H1 (cell line): ENCODE measurements at regions of chr2 and their contacts with region 1.

Region 1: GRCh38 chr2:201182650-201183364 is at the start of gene CASP10:
- DNase-seq: no peak
- H3K4me3 ChIP-seq: peak within 1 kb of the TSS in 3 of 4 experiments; percentile 5 to 47 (median 17); a peak in 4 of 8 replicates
- H3K27ac ChIP-seq: peak within 1 kb of the TSS; percentile 46; the same call in 1 of the 2 replicates
- H3K4me1 ChIP-seq: no peaks in the 10 kb centered on the region
- H3K27me3 ChIP-seq: no peaks in the 10 kb centered on the region
- CTCF ChIP-seq: peak in 2 of 3 experiments; percentile 43 to 60; a peak in 3 of 4 replicates
- EP300 ChIP-seq: no peak
- POLR2A ChIP-seq: peak in 1 of 2 experiments; percentile 58; a peak in 1 of 3 replicates
- RAD21 ChIP-seq: peak; percentile 63 to 71
- total RNA-seq, gene CASP10: 4.0 and 4.2 TPM in 2 replicates

Region 2: DNA sequence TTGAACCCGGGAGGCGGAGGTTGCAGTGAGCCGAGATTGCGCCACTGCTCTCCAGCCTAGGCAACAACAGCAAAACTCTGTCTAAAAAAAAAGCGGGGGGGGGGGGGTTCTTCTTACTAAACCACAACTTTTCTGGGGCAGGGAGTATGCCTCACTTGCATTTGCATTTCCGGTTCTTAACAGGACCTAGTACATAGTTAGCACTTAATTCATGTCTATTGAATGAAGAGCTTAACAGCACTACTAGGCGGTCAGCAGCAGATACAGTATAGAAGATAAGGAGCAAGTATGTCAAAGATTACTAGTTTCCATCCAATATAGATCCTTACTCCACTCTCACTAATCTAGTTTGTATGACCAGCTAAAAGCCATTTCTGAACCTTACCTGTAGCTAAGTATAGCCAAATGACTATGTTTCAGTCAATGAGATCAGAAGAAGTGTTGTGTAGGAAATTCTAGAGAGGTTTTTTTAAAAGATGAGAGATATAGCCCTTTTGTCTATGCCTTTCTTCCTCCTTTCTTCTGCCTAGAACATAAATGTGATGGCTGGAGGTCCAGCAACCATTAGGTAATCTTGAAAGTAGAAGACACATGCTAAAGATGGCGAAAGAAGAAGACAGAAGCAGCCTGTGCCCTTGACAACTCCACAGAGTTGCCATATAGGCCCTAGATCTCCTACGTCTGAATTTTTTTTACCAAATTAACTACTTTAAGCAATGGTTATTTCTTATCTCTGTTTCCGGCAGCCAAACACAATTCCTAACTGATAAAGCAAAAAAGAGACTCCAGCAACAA is 122.6 kb before region 1 on chr2:
- CTCF ChIA-PET with region 1: no interaction called
- POLR2A ChIA-PET with region 1: no interaction called
- DNase-seq: no peak
- H3K4me3 ChIP-seq: no peak overlapping the region
- H3K27ac ChIP-seq: no peak overlapping the region
- H3K4me1 ChIP-seq: no peaks in the 10 kb centered on the region
- H3K27me3 ChIP-seq: no peaks in the 10 kb centered on the region
- CTCF ChIP-seq: no peak
- EP300 ChIP-seq: no peak
- POLR2A ChIP-seq: no peak
- RAD21 ChIP-seq: no peak

Region 3: GRCh38 chr2:201171259-201171814 is 11.5 kb before region 1 on chr2:
- CTCF ChIA-PET with region 1: no interaction called
- POLR2A ChIA-PET with region 1: no interaction called
- DNase-seq: no peak
- H3K4me3 ChIP-seq: no peak overlapping the region
- H3K27ac ChIP-seq: no peak overlapping the region
- H3K4me1 ChIP-seq: no peaks in the 10 kb centered on the region
- H3K27me3 ChIP-seq: no peaks in the 10 kb centered on the region
- CTCF ChIP-seq: no peak
- EP300 ChIP-seq: no peak
- POLR2A ChIP-seq: no peak
- RAD21 ChIP-seq: no peak

Region 4: DNA sequence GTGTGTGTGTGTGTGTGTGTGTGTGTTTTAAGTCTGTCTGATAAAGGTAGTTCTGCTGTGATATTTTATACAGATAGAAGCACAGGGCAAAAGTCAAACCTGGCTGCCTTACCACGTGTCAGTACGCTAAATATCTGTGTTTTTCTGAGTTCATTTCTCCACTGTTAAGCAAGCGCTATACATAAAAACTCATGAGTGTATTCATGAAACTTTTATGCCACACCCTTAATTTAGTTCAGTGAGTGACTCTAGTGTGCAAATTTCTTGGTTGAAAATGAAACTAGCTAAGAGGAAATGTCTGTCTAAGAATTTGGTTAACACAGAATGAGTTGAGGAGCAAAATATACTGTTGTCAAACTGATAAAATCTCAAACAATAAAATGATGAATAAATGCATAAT is 11.3 kb after region 1 on chr2:
- CTCF ChIA-PET with region 1: interaction called, 11 read pairs
- POLR2A ChIA-PET with region 1: interaction called, 3 read pairs
- DNase-seq: no peak
- H3K4me3 ChIP-seq: no peak overlapping the region
- H3K27ac ChIP-seq: no peak overlapping the region
- H3K4me1 ChIP-seq: no peaks in the 10 kb centered on the region
- H3K27me3 ChIP-seq: no peaks in the 10 kb centered on the region
- CTCF ChIP-seq: no peak
- EP300 ChIP-seq: no peak
- POLR2A ChIP-seq: no peak
- RAD21 ChIP-seq: no peak